ENCODE measurements at regions of chr2 and their contacts with region 1.

Region 1: GRCh38 chr2:197804049-197804757 is at the start of gene PLCL1:
- DNase-seq: peak; percentile 94 to 99 (median 96)

Region 2: DNA sequence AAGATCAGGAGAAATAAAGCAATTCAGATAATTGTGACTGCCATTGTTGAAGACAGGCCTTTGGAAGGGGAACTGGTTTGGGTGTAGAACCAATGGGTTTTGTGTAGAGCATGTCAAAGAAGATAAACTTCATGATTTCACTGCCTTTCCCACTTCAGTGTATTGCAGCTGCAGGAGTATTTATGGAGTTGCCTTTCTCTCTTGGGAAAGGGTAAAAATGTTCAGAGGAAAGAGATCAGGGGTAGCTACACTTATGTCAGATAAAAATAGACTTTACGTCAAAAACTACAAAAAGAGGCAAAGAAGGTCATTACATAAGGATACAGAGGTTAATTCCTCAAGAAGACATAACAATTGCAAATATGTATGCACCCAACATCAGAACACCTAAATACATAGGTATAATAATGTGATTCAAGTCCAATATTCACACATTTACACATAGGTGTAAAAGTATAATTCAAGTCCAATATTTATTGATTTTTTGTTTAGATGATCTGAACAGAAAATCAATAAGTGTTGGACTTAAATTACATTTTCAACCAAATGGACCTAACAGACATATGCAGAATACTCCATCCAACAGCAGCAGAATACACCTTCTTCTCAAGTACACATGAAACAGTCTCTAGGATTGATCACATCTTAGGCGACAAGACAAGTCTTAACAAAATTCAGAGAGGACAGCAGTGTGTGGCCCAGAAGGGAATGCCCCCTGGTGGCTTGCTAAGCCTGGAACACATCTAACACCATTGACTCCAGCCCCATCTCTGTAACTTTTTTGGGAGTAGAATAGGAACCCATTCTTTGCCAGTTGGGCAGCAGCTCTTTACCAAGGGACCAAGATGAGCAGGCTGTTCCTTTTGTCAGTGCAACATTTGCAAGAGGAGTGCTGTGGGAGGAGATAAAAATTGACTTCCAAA is 249.8 kb after region 1 on chr2:
- intact Hi-C with region 1: loop called (anchors 5 kb)
- DNase-seq: peak in 6 of 10 donors; percentile 14 to 83 (median 24)

Region 3: DNA sequence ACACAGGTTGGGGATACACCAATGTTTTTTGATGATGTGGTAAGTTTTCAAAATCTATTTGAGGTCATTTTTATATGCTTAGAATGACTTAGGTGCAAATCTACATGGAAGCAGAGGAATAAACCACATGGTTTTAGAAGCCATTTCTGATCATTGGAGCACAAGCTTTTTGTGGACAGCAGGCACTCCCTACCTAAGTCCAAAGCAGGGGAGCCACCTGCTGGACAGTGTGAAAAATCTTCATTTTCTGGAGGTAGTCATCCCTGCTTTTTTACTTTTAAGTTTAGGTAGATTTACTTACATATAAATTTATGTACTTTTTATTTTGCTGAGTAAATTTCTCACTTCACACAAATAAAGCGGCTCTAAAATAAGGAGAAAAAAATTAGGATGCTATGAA is 323.4 kb after region 1 on chr2:
- intact Hi-C with region 1: loop called (anchors 5 kb)
- DNase-seq: peak in 4 of 10 donors; percentile 14 to 82 (median 24)

Region 4: DNA sequence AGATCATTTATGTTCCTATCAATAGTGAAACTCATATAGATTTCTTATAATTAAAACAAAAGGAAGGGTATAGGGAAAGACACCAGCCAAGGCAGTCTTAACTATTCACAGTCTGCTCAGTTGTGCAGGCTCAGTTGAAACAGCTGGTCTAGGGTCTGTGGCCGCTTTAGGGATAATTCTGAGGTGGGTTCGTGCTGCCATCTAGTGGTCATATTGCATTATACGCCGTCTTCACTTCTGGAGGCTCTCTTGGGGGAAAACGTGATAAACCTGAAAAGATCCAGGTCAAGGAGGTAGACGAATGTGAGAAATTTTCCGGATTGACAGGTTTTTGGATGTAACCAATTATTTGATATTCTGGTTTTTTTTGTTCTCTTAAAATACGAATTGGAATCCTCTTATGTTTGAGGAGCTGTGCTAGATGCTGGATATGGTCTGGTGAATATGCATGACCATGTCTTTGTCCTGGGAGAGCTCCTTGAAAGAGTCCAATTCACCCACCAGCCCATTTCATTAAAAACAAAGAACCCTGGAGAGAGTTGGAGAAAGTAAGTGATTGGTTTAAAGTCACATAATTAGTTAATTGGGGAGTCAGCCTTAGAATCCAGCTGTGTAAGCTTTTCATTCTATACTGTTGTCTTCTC is 492.6 kb after region 1 on chr2:
- intact Hi-C with region 1: loop called (anchors 1 kb)
- DNase-seq: peak in 8 of 10 donors; percentile 28 to 91 (median 67)

Measured in posterior cingulate gyrus (tissue), 11 donors.